Dendritic cell treated with granulocyte-macrophage colony-stimulating factor and Interleukin-4, amounts not matched to agents 40 ng/mL and 50 ng/mL, for 4 days (primary cell): ENCODE measurements at regions of chr3 and their contacts with region 1.

Region 1: DNA sequence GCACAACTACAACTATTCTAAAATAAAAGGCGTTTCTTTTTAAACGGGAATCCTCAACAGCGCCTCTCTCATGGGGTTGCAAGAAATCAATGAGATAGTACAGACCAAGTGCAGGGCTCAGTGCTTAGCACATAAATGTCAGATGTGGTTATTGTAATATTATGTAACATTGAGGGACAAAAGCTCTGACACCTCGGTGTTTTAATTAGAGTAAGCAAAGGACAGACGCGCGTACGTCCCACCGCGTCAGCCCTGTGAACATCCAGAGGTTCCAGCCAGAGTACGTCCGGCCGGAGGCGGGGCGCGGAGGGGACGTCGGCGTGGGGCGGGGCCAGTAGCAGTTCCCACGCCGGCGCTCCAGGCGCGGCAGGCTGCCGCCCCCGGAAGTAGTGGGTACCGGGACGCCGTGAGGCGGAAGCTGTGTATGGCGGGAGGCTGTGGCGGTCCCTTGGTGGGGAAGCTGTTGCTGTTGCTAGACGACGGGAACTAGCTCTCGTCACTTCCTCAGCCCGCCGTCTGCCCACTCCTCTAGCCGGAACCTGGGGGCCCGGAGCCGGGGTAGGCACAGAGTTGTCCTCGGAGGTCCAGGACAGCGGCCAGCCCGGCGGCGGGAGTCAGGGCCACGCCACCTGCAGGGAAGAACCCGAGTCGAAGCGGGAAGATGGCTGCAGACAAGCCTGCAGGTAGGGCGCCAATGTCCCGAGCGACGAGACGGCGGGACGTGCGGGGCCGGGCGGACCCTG is at the start of gene CNOT10:
- H3K4me3 Mint-ChIP-seq: peak within 1 kb of the TSS; percentile 98
- H3K27ac Mint-ChIP-seq: peak within 1 kb of the TSS; percentile 91
- H3K4me1 Mint-ChIP-seq: peaks cover 26% of the 10 kb centered on the region
- H3K27me3 Mint-ChIP-seq: peaks cover 2% of the 10 kb centered on the region

Region 2: DNA sequence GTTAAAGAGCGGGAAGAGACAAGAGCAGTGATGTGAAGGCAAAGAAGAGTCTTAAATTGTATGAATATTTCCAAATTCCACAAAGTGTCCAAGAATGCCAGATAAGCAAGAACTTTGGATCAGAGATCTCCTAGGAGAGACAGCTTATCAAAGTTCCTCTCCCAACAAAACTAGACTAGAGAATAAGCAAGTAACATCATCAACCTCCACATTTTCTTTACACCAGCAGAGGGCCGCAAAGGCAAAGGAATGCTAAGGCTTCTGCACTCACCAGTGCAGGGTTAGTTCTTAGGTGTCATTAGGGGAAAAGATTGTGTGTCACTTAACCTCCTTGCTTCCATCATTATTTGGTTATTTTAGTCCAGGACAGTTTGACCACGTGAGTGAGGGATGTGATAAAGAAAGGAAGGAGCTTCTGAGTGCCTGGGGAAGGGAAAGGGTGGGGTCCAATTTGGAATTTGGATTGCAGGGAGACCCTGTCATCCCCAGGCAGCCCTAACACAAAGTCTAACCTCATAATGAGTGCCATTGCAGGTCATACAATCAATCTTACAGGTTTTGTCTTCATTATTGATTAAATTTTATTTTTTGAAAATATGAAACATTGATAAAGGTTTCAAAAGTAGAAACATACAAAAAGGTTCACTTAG is 174.8 kb before region 1 on chr3:
- intact Hi-C with region 1: loop called (anchors 5 kb)
- H3K4me3 Mint-ChIP-seq: no peak overlapping the region
- H3K27ac Mint-ChIP-seq: no peak overlapping the region
- H3K4me1 Mint-ChIP-seq: peaks cover 19% of the 10 kb centered on the region
- H3K27me3 Mint-ChIP-seq: no peaks in the 10 kb centered on the region

Region 3: GRCh38 chr3:32698506-32698905 is 13.5 kb after region 1 on chr3:
- intact Hi-C with region 1: loop called (anchors 1 kb)
- H3K4me3 Mint-ChIP-seq: peak overlapping the region; percentile 6
- H3K27ac Mint-ChIP-seq: peak overlapping the region; percentile 78
- H3K4me1 Mint-ChIP-seq: peaks cover 27% of the 10 kb centered on the region
- H3K27me3 Mint-ChIP-seq: no peaks in the 10 kb centered on the region